ENCODE measurements at regions of chr17 and their contacts with region 1.

Region 1: GRCh38 chr17:68377862-68378770 is 79.2 kb downstream of the WIPI1 start:
- DNase-seq: peak; percentile 89 to 99 (median 93)
- ATAC-seq: peak; percentile 92 to 94 (median 94)
- H3K4me3 ChIP-seq: peak overlapping the region in 8 of 12 donors; percentile 8 to 31 (median 18)
- H3K27ac ChIP-seq: peak overlapping the region; percentile 87 to 99 (median 96)
- H3K4me1 ChIP-seq: peaks cover 7 to 55% (median 35%) of the 10 kb centered on the region in 12 donors
- H3K27me3 ChIP-seq: no peaks in the 10 kb centered on the region
- CTCF ChIP-seq: no peak
- POLR2A ChIP-seq: no peak

Region 2: DNA sequence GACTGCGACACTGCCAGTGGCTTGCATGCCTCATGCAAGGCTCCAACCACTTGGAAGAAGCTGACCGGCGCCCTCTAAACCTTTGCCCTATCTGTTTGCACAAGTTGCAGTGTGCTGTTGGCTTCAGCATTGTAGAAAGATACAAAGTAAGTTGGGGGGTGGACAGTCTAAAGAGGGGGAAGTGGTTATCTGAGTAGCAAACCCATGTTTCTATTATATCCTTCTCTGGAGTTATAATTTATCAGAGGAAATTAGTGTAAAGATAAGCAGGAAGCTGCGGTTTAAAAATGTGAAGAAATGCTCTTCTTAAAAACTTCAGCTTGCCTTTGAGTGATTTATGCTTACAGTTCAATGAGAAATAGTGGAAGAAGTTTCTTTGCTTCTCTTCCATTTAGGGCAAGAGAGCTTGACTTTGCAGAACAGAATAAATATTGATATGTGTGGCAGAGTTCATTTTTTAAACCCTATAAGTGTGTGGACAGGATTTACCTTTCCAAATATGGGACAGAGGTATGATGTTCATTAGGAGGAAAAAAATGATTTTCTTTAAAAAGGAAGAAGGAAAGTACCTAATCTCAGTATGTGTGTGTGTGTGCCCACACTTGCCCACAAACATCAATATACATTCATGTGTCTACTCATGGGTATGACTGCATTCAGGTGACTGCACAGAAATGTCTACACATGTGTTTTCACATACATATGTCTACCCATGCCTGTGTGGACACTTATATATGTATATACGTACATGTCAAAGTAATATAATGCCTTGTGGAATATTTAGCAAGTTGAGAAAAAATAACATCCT is 122.2 kb before region 1 on chr17:
- intact Hi-C with region 1: loop called in 1 of 10 experiments (anchors 5 kb)
- DNase-seq: no peak
- ATAC-seq: no peak
- H3K4me3 ChIP-seq: no peak overlapping the region
- H3K27ac ChIP-seq: peak overlapping the region in 1 of 12 donors; percentile 64
- H3K4me1 ChIP-seq: peaks cover 0 to 51% (median 10%) of the 10 kb centered on the region in 12 donors
- H3K27me3 ChIP-seq: no peaks in the 10 kb centered on the region
- CTCF ChIP-seq: no peak
- POLR2A ChIP-seq: no peak

Region 3: GRCh38 chr17:68418876-68419275 is 40.8 kb after region 1 on chr17:
- intact Hi-C with region 1: no loop called
- DNase-seq: no peak
- ATAC-seq: no peak
- H3K4me3 ChIP-seq: no peak overlapping the region
- H3K27ac ChIP-seq: no peak overlapping the region
- H3K4me1 ChIP-seq: peaks cover 0 to 14% (median 0%) of the 10 kb centered on the region in 12 donors
- H3K27me3 ChIP-seq: no peaks in the 10 kb centered on the region
- CTCF ChIP-seq: no peak
- POLR2A ChIP-seq: no peak

Measured in heart left ventricle (tissue), 16 donors.